ENCODE measurements at regions of chr7 and their contacts with region 1.

Region 1: DNA sequence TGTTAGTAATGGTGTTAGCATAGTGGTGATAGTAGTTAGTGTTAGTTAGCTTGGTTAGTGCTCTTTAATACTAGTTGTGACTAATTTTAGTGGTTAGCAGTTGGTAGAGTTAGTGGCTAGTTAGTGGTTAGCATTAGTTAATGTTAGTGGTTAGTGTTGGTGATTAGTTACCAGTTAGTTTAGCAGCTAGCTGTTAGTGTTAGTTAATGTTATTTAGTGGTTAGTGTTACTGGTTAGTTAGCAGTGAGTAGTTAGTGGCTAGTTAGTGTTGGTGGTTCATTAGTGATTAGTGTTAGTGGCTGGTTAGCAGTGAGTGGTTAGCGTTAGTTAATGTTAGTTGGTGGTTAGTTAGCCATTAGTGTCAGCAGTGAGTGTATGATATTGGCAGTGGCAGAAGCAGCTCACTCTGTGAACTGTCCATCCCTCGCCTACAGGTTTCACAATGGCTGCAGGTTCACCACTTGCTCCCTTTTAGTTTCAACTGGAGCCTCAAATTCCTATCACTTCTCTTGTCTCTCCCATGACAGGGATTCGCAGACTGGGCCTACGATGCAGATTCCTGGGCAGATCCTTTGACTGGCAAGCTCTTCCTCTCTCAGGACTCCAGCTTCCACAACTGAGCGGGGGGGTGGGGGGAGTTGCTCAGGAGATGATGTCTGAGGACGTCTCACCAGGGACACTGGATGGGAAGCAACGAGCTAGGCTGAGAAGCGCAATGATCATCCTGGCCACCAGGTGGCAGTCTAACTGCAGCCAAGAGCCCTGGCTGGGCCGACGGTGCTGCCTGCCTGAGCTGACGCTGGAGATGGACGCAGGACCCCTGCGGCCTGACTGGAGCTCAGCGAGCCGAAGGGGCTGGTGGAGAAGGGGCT is 19.5 kb downstream of the GHRHR start:
- DNase-seq: peak; percentile 88
- ATAC-seq: peak; percentile 94
- H3K4me3 Mint-ChIP-seq: peak overlapping the region; percentile 9
- H3K27ac Mint-ChIP-seq: no peak overlapping the region
- H3K4me1 Mint-ChIP-seq: peaks cover 4% of the 10 kb centered on the region
- H3K27me3 Mint-ChIP-seq: peaks cover 33% of the 10 kb centered on the region

Region 2: GRCh38 chr7:29598628-29599425 is 1384.5 kb before region 1 on chr7:
- CTCF ChIA-PET with region 1: no interaction called
- POLR2A ChIA-PET with region 1: no interaction called
- intact Hi-C with region 1: no loop called
- DNase-seq: no peak
- ATAC-seq: no peak
- H3K4me3 Mint-ChIP-seq: no peak overlapping the region
- H3K27ac Mint-ChIP-seq: no peak overlapping the region
- H3K4me1 Mint-ChIP-seq: no peaks in the 10 kb centered on the region
- H3K27me3 Mint-ChIP-seq: peaks cover 5% of the 10 kb centered on the region

Region 3: DNA sequence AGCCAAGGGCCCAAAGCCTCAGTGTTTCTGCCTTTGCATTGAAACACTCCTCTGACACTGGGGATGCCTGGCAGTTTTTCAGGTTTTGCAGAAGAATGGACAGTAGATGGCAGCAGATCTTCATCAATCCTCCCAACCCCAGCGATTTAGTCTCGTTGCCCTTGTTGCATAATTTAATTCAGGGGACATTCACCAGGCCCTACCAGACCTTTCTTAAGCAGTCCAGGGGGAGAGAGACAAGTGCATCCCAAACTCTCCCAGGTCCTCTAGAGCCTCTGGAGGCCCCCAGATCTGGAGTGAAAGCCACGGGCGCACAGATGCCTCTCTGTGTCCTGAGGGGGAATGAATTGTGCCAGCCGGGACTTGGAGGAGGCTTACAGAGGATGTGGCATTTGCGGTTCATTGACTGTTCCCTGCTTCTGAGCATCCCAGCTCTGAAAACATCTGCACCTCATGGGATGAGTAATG is 182.5 kb before region 1 on chr7:
- CTCF ChIA-PET with region 1: interaction called, 3 read pairs
- POLR2A ChIA-PET with region 1: no interaction called
- intact Hi-C with region 1: loop called in 1 of 2 experiments (anchors 2 kb)
- DNase-seq: peak; percentile 49
- ATAC-seq: peak; percentile 55
- H3K4me3 Mint-ChIP-seq: no peak overlapping the region
- H3K27ac Mint-ChIP-seq: no peak overlapping the region
- H3K4me1 Mint-ChIP-seq: peaks cover 13% of the 10 kb centered on the region
- H3K27me3 Mint-ChIP-seq: no peaks in the 10 kb centered on the region

Region 4: GRCh38 chr7:30996256-30996655 is 13.0 kb after region 1 on chr7:
- CTCF ChIA-PET with region 1: interaction called, 22 read pairs
- POLR2A ChIA-PET with region 1: no interaction called
- intact Hi-C with region 1: no loop called
- DNase-seq: no peak
- ATAC-seq: no peak
- H3K4me3 Mint-ChIP-seq: no peak overlapping the region
- H3K27ac Mint-ChIP-seq: no peak overlapping the region
- H3K4me1 Mint-ChIP-seq: no peaks in the 10 kb centered on the region
- H3K27me3 Mint-ChIP-seq: peaks cover 2% of the 10 kb centered on the region

Region 5: DNA sequence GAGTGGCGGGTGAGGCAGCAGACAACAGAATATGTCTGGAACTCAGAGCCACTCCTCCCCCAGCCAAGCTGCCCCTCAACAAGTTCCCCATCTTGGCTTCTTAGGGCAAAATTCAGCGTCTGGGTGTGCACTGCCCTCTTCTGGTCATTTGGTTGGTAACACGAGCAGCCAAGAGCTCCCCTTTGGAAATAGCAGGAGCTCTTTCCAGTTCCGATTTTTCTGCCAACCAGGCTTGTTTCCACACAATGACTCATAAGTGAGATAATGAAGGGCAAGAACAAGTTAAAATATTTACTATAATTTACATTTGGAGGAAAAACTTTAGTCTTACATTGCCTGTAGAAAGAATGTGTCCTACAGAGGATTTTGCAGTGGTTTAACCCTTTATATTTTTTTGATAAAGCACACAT is 139.4 kb after region 1 on chr7:
- CTCF ChIA-PET with region 1: interaction called, 261 read pairs
- POLR2A ChIA-PET with region 1: no interaction called
- intact Hi-C with region 1: loop called (anchors 1 kb)
- DNase-seq: peak; percentile 67
- ATAC-seq: peak; percentile 61
- H3K4me3 Mint-ChIP-seq: no peak overlapping the region
- H3K27ac Mint-ChIP-seq: no peak overlapping the region
- H3K4me1 Mint-ChIP-seq: no peaks in the 10 kb centered on the region
- H3K27me3 Mint-ChIP-seq: peaks cover 4% of the 10 kb centered on the region

Region 6: GRCh38 chr7:31488562-31489203 is 505.4 kb after region 1 on chr7:
- CTCF ChIA-PET with region 1: no interaction called
- POLR2A ChIA-PET with region 1: no interaction called
- intact Hi-C with region 1: loop called in 1 of 2 experiments (anchors 10 kb)
- DNase-seq: peak; percentile 72
- ATAC-seq: peak; percentile 68
- H3K4me3 Mint-ChIP-seq: no peak overlapping the region
- H3K27ac Mint-ChIP-seq: no peak overlapping the region
- H3K4me1 Mint-ChIP-seq: no peaks in the 10 kb centered on the region
- H3K27me3 Mint-ChIP-seq: no peaks in the 10 kb centered on the region

Region 7: GRCh38 chr7:31540721-31541120 is 557.4 kb after region 1 on chr7:
- CTCF ChIA-PET with region 1: no interaction called
- POLR2A ChIA-PET with region 1: no interaction called
- intact Hi-C with region 1: no loop called
- DNase-seq: no peak
- ATAC-seq: no peak
- H3K4me3 Mint-ChIP-seq: no peak overlapping the region
- H3K27ac Mint-ChIP-seq: no peak overlapping the region
- H3K4me1 Mint-ChIP-seq: no peaks in the 10 kb centered on the region
- H3K27me3 Mint-ChIP-seq: peaks cover 2% of the 10 kb centered on the region

Measured in activated CD4-positive, alpha-beta T cell treated with anti-CD3 and anti-CD28 coated beads for 36 hours (primary cell).